ENCODE measurements at regions of chr7 and their contacts with region 1.

Region 1: GRCh38 chr7:25894902-25895791 is 256.9 kb upstream of the NFE2L3 start:
- DNase-seq: peak; percentile 73 to 90 (median 89)
- ATAC-seq: peak; percentile 79 to 83
- H3K4me3 ChIP-seq: peak overlapping the region; percentile 8
- H3K27ac ChIP-seq: no peak overlapping the region
- H3K4me1 ChIP-seq: no peaks in the 10 kb centered on the region
- H3K27me3 ChIP-seq: no peaks in the 10 kb centered on the region

Region 2: GRCh38 chr7:25777969-25778708 is 117.0 kb before region 1 on chr7:
- intact Hi-C with region 1: no loop called
- DNase-seq: peak in 2 of 3 donors; percentile 53 to 77
- ATAC-seq: no peak
- H3K4me3 ChIP-seq: no peak overlapping the region
- H3K27ac ChIP-seq: no peak overlapping the region
- H3K4me1 ChIP-seq: no peaks in the 10 kb centered on the region
- H3K27me3 ChIP-seq: no peaks in the 10 kb centered on the region

Region 3: GRCh38 chr7:26061688-26062150 is 166.6 kb after region 1 on chr7:
- intact Hi-C with region 1: loop called (anchors 5 kb)
- DNase-seq: peak; percentile 41 to 80 (median 65)
- ATAC-seq: peak in 1 of 2 donors; percentile 66
- H3K4me3 ChIP-seq: no peak overlapping the region
- H3K27ac ChIP-seq: no peak overlapping the region
- H3K4me1 ChIP-seq: no peaks in the 10 kb centered on the region
- H3K27me3 ChIP-seq: no peaks in the 10 kb centered on the region

Region 4: DNA sequence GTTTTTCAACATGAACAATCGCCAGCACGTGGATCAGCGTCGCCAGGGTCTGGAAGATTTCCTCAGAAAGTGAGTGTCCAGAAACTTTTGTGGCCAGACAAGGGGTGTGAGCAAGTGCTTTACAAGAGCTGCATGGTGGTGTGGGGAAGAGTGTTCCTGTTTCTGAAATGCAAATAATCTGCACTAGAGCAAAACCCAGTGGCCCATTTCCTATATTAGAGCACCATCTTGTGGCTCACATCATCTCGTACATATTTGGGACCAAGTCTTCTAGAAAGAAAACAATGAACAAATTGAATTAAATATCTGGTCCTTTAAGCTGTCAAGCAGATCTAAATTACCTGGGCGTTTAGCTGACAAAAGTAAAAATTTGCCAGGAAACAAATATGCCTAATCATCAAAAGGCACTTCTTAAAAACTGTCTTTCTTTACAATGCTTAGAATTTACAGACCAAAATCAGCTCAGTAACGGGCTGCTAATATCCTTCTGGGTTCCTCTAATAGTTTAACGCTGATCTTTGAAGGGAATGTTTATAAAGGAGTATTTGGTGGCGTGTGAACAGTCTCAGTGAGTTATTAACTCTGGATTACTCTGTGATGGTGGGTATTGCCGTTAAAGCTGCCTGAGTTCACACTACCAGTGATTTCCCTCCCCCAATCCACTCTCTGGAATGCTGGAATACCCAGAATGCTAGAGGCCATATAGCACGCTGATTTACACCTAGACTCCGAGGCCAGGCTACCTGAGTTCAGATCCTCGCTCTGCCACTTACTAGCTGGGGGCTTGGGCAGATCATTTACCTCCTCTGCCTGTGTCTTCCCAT is 470.1 kb after region 1 on chr7:
- intact Hi-C with region 1: loop called (anchors 2 to 5 kb)
- DNase-seq: no peak
- ATAC-seq: peak; percentile 84 to 86
- H3K4me3 ChIP-seq: no peak overlapping the region
- H3K27ac ChIP-seq: no peak overlapping the region
- H3K4me1 ChIP-seq: no peaks in the 10 kb centered on the region
- H3K27me3 ChIP-seq: no peaks in the 10 kb centered on the region